Heart right ventricle (tissue), 16 donors: ENCODE measurements at regions of chr5 and their contacts with region 1.

Region 1: GRCh38 chr5:876398-877365 is 15.9 kb downstream of the BRD9 start:
- DNase-seq: no peak
- ATAC-seq: no peak
- H3K4me3 ChIP-seq: no peak overlapping the region
- H3K27ac ChIP-seq: no peak overlapping the region
- H3K4me1 ChIP-seq: peaks cover 0 to 18% (median 0%) of the 10 kb centered on the region in 9 donors
- H3K27me3 ChIP-seq: no peaks in the 10 kb centered on the region
- CTCF ChIP-seq: no peak

Region 2: DNA sequence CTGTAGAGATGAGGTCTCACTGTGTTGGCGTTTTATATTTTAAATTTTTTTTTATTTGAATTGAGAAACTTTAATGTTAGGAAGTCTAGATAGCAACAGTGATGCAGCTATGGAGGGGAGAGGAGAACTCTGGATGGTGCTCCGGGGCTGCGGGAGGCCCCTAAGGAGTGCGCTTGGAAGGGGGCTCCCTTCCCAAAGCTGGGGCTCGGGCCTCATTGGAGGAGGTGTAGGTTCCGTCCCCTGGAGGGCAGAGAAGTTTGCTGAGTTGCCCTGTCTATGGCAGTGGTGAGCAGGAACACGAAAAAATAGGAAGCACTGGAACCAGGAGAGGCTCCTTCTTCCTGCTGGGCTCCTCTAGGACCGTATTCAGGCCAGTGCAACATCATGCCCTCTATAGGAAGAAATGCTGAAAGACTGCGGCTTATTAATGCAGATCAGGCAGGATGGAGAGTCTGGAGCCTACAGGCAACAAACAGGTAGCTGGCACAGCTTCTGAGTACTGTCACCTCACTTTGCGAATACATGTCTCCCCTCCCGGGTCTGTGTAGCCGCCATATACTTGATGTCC is 539.0 kb before region 1 on chr5:
- intact Hi-C with region 1: no loop called
- DNase-seq: no peak
- ATAC-seq: no peak
- H3K4me3 ChIP-seq: no peak overlapping the region
- H3K27ac ChIP-seq: no peak overlapping the region
- H3K4me1 ChIP-seq: no peaks in the 10 kb centered on the region
- H3K27me3 ChIP-seq: peaks cover 0 to 15% (median 0%) of the 10 kb centered on the region in 7 donors
- CTCF ChIP-seq: peak in 4 of 9 donors; percentile 8 to 19 (median 16)

Region 3: DNA sequence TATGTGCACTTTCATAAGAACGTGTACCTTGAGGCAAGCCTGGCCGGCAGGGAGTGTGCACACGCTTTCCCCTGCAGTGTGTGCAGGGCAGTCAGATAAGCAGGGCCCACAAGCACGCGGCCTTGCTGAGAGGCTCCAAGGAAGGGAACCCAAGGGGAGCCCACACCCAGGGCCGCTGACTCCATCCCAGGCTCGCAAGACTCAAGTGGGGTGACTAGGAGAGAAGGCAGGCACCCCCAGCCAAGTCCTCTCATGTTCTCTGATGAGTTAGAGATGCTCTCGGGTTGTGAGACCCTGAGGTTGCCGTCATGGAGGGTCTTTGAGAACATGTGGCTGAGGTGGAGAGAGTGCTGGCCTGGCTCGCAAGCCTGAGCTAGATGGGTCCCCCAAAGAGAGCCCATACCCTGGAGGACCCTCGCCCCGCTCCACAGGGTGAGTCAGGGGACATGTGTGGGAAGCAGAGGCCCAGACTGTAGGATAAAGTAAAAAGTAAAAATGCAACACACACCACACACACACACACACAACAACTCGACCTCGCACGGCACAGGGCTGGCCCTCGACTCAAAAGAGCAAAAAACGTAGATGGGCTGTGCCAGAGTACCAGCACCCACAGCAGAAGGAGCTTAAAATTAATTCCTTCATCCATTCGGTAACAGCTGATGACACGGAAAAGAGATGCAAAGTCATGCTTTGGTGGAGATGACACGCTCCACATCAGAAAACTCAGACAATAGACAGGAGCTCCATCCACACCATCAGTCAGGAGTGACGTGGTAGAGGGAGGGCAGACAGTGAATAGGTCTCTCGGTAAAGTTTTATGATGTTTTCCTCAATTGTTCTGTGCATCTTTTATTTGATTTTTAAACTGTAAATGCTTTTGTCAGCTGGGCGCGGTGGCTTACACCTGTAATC is 77.1 kb after region 1 on chr5:
- intact Hi-C with region 1: loop called in 1 of 10 experiments (anchors 2 kb)
- DNase-seq: no peak
- ATAC-seq: no peak
- H3K4me3 ChIP-seq: no peak overlapping the region
- H3K27ac ChIP-seq: no peak overlapping the region
- H3K4me1 ChIP-seq: peaks cover 0 to 22% (median 15%) of the 10 kb centered on the region in 9 donors
- H3K27me3 ChIP-seq: peaks cover 0 to 74% (median 35%) of the 10 kb centered on the region in 7 donors
- CTCF ChIP-seq: no peak